Esophagus muscularis mucosa (tissue), 4 donors: ENCODE measurements at regions of chr3 and their contacts with region 1.

Region 1: DNA sequence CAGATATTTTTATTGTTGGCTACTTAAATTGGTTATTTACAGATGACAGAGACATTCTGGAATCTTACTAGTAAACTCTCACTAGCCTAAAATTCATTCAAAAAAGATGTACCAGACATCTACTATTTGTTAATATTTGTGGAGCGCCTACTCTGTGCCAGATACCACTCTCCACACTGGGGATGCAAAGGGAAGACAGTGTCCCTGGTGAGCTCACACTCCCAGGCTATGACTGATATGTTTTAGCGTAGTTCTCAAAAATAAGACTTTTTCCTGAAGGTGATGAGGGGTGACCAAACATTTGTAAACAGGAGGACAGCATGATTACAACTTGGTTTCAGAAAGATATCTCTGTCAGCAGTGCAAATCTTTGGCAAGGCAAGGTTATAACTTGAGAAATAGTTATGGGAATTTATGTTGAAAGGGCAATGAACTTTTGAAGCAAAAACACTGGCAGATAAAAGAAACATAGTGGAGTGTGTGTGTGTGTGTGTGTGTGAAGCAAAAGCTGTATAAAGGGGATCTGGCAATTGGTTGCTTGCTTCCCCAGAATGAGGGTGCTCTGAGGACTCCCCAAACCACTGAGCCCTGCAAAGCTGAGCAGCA is 51.2 kb downstream of the HACD2 start:
- DNase-seq: no peak
- H3K4me3 ChIP-seq: no peak overlapping the region
- H3K27ac ChIP-seq: peak overlapping the region in 1 of 4 donors; percentile 15
- H3K4me1 ChIP-seq: peaks cover 0 to 18% (median 9%) of the 10 kb centered on the region in 4 donors
- H3K27me3 ChIP-seq: no peaks in the 10 kb centered on the region
- CTCF ChIP-seq: no peak
- EP300 ChIP-seq: no peak
- POLR2A ChIP-seq: no peak

Region 2: GRCh38 chr3:122880624-122881023 is 653.0 kb before region 1 on chr3:
- intact Hi-C with region 1: loop called (anchors 5 kb)
- DNase-seq: no peak
- H3K4me3 ChIP-seq: no peak overlapping the region
- H3K27ac ChIP-seq: no peak overlapping the region
- H3K4me1 ChIP-seq: no peaks in the 10 kb centered on the region
- H3K27me3 ChIP-seq: no peaks in the 10 kb centered on the region
- CTCF ChIP-seq: no peak
- EP300 ChIP-seq: no peak
- POLR2A ChIP-seq: no peak